Breast epithelium (tissue), 4 donors: ENCODE measurements at regions of chr1 and their contacts with region 1.

Region 1: GRCh38 chr1:114669562-114670082 is at the start of gene DENND2C:
- DNase-seq: no peak
- H3K4me3 ChIP-seq: peak within 1 kb of the TSS; percentile 59 to 96 (median 73)
- H3K27ac ChIP-seq: peak within 1 kb of the TSS; percentile 77 to 89
- H3K4me1 ChIP-seq: no peaks in the 10 kb centered on the region
- H3K27me3 ChIP-seq: no peaks in the 10 kb centered on the region
- CTCF ChIP-seq: no peak
- POLR2A ChIP-seq: no peak
- total RNA-seq, gene DENND2C: 2.6 to 5.9 (median 3.3) TPM

Region 2: DNA sequence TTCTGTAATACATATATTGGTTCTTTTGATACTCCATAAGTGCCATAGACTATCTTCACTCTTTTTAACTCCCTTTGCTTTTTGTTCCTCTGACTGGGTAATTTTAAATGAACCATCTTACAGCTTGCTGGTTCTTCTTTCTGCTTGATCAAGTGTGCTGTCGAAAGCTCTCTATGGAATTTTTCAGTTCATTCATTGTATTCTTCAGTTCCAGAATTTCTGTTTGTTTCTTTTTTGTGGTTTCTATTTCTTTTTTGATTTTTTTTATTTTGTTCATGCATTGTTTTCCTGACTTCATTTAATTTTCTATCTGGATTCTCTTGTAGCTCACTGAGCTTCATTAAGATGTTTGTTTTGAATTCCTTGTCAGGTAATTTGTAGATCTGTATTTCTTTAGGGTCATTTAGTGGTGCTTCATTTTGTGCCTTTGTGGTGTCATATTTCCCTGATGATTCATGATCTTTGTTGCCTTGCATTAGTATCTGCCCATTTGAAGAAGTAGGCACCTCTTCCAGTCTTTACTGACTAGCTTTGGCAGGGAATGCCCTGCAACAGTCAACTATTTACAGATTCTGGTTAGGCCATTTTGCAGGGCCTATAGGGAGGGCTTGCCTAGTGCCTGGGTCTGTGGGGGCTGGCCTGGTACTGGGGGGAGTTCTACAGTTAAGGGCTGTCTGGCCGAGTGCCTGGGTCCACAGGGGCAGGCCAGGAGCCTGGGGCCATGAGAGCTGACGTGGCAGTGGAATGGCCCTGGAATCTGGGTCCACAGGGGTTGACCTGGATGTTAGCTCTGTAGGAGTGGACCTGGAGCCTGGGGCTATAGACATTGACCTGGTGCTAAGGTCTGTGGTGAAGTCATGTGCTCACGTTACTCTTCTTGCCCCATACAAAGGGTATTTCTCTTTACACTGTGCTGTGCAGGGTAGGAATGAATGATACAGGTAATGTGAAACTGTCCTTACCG is 1189.6 kb before region 1 on chr1:
- intact Hi-C with region 1: no loop called
- DNase-seq: no peak
- H3K4me3 ChIP-seq: no peak overlapping the region
- H3K27ac ChIP-seq: no peak overlapping the region
- H3K4me1 ChIP-seq: no peaks in the 10 kb centered on the region
- H3K27me3 ChIP-seq: no peaks in the 10 kb centered on the region
- CTCF ChIP-seq: no peak
- POLR2A ChIP-seq: no peak

Region 3: DNA sequence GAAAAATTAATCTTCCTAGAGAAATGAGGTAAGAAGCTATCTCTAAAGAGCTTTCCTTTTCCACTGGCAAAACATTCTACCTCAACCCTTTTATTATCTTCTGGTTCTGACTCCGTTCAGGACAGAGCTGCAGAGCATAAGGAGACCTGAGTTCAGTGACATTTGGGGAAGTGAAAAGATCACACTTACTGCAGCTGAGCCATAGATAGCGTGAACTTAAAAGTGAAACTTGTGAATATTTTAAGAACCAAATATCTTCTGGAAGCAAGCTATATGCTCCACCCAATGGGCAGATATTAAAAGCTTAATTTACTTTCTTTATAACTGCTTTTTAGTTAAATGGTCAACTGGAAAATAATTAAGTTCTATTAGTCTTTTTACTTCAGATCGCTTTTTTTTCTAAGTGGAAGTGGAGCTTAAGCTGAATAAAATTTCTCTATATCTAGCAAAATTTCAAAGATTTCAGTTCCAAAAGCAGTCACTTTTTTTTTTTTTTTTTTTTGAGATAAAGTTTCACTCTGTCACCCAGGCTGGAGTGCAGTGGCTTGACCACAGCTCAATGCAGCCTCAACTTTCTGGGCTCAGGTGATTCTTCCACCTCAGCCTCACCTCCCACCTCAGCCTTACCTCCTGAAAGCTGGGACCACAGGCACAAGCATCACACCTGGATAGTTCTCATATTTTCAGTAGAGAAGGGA is 810.0 kb before region 1 on chr1:
- intact Hi-C with region 1: loop called (anchors 10 kb)
- DNase-seq: no peak
- H3K4me3 ChIP-seq: no peak overlapping the region
- H3K27ac ChIP-seq: no peak overlapping the region
- H3K4me1 ChIP-seq: no peaks in the 10 kb centered on the region
- H3K27me3 ChIP-seq: no peaks in the 10 kb centered on the region
- CTCF ChIP-seq: no peak
- POLR2A ChIP-seq: no peak

Region 4: GRCh38 chr1:114648502-114648901 is 21.1 kb before region 1 on chr1:
- intact Hi-C with region 1: no loop called
- DNase-seq: no peak
- H3K4me3 ChIP-seq: no peak overlapping the region
- H3K27ac ChIP-seq: no peak overlapping the region
- H3K4me1 ChIP-seq: no peaks in the 10 kb centered on the region
- H3K27me3 ChIP-seq: no peaks in the 10 kb centered on the region
- CTCF ChIP-seq: no peak
- POLR2A ChIP-seq: no peak

Region 5: GRCh38 chr1:115179397-115179835 is 509.8 kb after region 1 on chr1:
- intact Hi-C with region 1: no loop called
- DNase-seq: no peak
- H3K4me3 ChIP-seq: no peak overlapping the region
- H3K27ac ChIP-seq: no peak overlapping the region
- H3K4me1 ChIP-seq: no peaks in the 10 kb centered on the region
- H3K27me3 ChIP-seq: no peaks in the 10 kb centered on the region
- CTCF ChIP-seq: no peak
- POLR2A ChIP-seq: no peak